ENCODE measurements at regions of chr22 and their contacts with region 1.

Region 1: GRCh38 chr22:26281941-26282340 is 112.7 kb downstream of the SEZ6L start:
- DNase-seq: no peak
- H3K4me3 ChIP-seq: no peak overlapping the region
- CTCF ChIP-seq: no peak
- POLR2A ChIP-seq: no peak

Region 2: GRCh38 chr22:26008587-26008986 is 273.4 kb before region 1 on chr22:
- intact Hi-C with region 1: no loop called
- DNase-seq: no peak
- H3K4me3 ChIP-seq: no peak overlapping the region
- CTCF ChIP-seq: no peak
- POLR2A ChIP-seq: no peak

Region 3: GRCh38 chr22:26763633-26764361 is 481.9 kb after region 1 on chr22:
- intact Hi-C with region 1: loop called (anchors 5 kb)
- DNase-seq: no peak
- H3K4me3 ChIP-seq: no peak overlapping the region
- CTCF ChIP-seq: no peak
- POLR2A ChIP-seq: no peak

Measured in lower leg skin (tissue), 4 donors.